ENCODE measurements at regions of chr21 and their contacts with region 1.

Region 1: DNA sequence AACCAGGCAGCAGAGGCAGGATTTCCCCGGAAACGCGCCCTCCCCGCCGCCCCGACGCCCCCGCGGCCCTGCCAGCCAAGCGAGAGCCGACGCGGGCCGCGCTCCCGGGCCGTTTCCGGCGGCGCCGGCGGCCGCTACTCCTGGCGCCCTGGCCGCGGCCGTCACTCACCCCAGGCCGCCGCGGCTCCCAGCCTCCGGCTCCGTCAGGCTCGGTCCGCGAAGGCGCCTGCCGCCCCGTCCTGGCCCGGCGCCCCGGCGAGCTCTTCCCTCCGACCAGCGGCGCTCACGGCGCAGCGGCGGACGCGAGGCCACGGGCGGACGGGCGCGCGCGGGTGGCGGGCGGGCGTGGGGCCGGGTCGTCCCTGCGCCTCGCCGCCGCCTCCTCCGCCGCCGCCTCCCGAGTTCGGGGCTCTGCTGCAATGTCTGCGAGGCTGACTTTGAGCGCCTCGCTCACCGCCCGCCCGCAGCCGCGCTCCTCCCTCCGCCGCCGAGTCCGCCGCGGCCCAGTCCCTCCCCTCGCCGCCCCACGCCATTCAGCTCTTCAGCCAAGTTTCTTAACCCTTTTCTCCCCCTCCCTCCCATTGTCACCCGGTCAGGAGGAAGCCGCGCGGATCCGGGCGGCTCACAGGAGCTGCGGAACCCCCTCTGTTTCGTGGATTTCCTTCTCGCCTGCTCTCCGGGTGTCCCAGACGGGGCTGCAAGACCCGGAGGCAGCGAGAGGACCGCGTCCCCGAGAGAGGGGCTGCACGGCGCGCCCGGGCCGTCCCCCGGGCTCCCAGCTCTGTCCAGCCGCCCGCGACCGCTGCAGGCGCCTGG is at the start of gene NRIP1:
- DNase-seq: peak; percentile 90
- H3K4me3 ChIP-seq: peak within 1 kb of the TSS; percentile 80 to 87 (median 82)
- H3K27ac ChIP-seq: peak within 1 kb of the TSS; percentile 92
- H3K4me1 ChIP-seq: peaks cover 23% of the 10 kb centered on the region
- H3K27me3 ChIP-seq: no peaks in the 10 kb centered on the region
- CTCF ChIP-seq: no peak
- total RNA-seq, gene NRIP1: 40.8 to 73.7 TPM

Region 2: GRCh38 chr21:14877570-14878228 is 187.1 kb before region 1 on chr21:
- CTCF ChIA-PET with region 1: no interaction called
- dilution Hi-C with region 1: no loop called
- in situ Hi-C with region 1: no loop called
- intact Hi-C with region 1: loop called (anchors 5 kb)
- DNase-seq: peak; percentile 69
- H3K4me3 ChIP-seq: no peak overlapping the region
- H3K27ac ChIP-seq: no peak overlapping the region
- H3K4me1 ChIP-seq: peaks cover 22% of the 10 kb centered on the region
- H3K27me3 ChIP-seq: no peaks in the 10 kb centered on the region
- CTCF ChIP-seq: no peak

Region 3: DNA sequence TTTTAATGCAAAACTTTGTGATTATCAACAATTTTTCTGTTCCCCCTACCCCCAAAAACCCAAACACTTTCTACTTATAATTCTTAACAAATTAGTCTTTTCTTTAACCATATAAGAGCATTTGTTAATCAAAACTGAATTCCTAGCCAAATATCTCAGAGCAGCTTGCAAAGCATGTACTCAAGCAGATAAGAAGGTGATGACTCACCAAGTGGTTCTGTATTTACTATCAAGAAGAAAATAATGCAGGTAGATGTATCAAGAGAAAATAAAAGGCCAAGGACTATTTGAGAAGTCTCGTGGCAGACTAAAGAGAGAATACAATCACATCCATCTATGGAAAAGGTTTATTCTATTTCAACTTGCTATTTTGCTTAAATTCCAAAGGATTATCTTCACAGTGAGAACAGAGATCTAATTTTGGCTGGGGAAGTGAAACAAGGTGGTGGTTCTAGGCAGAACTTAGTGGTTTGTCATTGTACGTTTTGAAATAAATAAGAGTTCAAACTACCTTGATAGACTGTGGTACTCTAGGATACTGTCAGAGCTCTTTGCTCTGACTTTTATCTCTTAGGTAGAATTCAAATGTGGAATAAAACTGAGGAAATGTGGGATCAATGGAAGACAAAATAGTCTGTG is 94.7 kb after region 1 on chr21:
- CTCF ChIA-PET with region 1: no interaction called
- dilution Hi-C with region 1: no loop called
- in situ Hi-C with region 1: no loop called
- intact Hi-C with region 1: no loop called
- DNase-seq: no peak
- H3K4me3 ChIP-seq: no peak overlapping the region
- H3K27ac ChIP-seq: no peak overlapping the region
- H3K4me1 ChIP-seq: peaks cover 4% of the 10 kb centered on the region
- H3K27me3 ChIP-seq: no peaks in the 10 kb centered on the region
- CTCF ChIP-seq: no peak

Region 4: DNA sequence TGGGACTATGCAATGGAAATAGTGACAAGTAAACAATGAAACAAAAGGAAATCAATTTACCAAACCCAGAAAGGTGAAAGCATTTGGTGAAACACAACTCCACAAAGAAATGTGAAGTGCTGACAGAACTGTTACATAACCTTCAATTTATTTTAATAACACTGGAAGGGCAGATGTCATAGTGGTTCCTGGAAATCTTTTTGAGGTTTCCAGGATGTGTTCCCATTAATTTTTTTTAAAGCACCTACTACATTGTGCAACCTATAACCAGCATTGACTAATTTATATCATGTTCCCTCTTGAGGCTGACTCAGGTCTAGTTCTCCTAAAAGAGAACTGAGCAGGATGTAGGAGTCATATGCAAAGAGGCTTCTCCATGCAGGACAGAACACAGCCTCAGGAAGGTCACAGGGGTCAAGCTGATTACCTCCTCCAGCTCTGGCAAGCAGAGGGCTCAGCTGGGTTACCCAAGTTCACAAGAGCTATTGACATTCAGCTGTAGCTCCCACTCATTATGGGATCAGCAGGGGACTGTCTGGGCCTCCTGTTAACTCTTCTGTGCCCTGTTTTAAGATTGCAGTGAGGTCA is 157.1 kb after region 1 on chr21:
- CTCF ChIA-PET with region 1: no interaction called
- dilution Hi-C with region 1: no loop called
- in situ Hi-C with region 1: loop called in 1 of 2 experiments (anchors 10 kb)
- intact Hi-C with region 1: loop called (anchors 2 kb)
- DNase-seq: peak; percentile 96
- H3K4me3 ChIP-seq: no peak overlapping the region
- H3K27ac ChIP-seq: peak overlapping the region; percentile 87
- H3K4me1 ChIP-seq: peaks cover 38% of the 10 kb centered on the region
- H3K27me3 ChIP-seq: no peaks in the 10 kb centered on the region
- CTCF ChIP-seq: peak in 1 of 2 donors; percentile 8

Region 5: GRCh38 chr21:15293240-15293639 is 228.5 kb after region 1 on chr21:
- CTCF ChIA-PET with region 1: no interaction called
- dilution Hi-C with region 1: no loop called
- in situ Hi-C with region 1: no loop called
- intact Hi-C with region 1: loop called (anchors 5 kb)
- DNase-seq: peak; percentile 83
- H3K4me3 ChIP-seq: no peak overlapping the region
- H3K27ac ChIP-seq: peak overlapping the region; percentile 14
- H3K4me1 ChIP-seq: peaks cover 24% of the 10 kb centered on the region
- H3K27me3 ChIP-seq: no peaks in the 10 kb centered on the region
- CTCF ChIP-seq: no peak

Region 6: DNA sequence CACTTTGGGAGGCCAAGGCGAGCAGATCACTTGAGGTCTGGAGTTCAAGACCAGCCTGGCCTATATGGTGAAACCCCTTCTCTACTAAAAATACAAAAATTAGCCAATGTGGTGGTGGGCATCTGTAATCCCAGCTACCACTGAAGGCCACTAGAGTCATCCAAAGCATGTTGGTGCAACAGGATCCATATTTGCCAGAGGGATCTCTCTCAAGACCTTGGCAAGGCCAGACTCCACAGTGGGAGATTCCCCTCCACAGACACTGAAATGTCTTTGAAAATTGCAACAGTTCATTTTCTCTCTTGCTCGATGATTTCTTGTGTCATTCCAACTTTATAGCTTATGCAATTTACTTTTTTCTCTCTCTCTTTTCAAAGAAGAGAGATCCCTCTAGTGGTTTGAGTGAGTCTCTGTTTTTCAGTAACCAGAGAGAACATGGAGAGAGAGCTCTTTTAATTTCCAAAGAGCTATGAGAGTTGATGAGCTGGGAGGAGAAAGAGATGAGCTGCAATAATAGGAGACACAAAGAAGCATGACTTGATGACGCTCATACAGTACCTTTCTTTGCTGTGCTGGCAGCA is 488.2 kb after region 1 on chr21:
- CTCF ChIA-PET with region 1: no interaction called
- dilution Hi-C with region 1: no loop called
- in situ Hi-C with region 1: no loop called
- intact Hi-C with region 1: loop called (anchors 1 kb)
- DNase-seq: peak; percentile 38
- H3K4me3 ChIP-seq: no peak overlapping the region
- H3K27ac ChIP-seq: no peak overlapping the region
- H3K4me1 ChIP-seq: no peaks in the 10 kb centered on the region
- H3K27me3 ChIP-seq: no peaks in the 10 kb centered on the region
- CTCF ChIP-seq: peak; percentile 56 to 72